Esophagus squamous epithelium (tissue), 5 donors: ENCODE measurements at regions of chr10 and their contacts with region 1.

Region 1: DNA sequence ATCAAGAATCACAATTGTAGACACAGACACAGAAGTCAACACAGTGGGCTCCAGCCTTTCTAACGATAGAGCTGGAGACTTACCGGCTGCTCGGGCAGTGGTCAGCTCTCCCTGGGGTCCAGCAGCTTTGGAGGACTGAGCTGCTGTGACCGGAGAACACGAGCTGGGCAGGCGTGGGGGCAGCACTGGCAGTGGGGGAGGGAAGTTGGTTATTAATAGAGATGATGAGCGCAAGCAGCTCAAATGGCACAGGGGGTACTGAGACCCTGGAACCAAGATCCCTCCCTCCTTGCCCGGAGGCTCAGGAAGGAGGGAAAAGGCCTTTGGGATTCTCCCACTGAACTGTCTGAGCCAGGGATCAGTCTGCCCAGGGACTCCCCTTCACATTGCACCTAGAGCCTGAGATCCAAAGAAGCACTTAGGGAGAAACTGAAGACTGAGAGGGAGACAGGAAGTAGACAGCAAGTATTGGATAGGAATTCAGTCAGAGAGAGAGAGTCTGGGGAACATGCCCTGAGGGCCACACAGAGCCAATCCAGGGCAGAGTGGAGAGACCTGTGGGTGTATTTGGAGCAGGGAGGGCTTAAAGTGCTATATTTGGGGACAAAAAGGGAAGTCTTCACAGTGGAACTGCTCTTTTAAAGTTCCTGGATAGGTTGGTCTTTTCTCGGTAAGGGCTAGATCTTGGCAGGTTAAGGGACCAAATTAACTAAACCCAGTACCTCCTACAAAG is at the start of gene MYOZ1:
- DNase-seq: no peak
- H3K4me3 ChIP-seq: no peak within 1 kb of the TSS
- H3K27ac ChIP-seq: no peak within 1 kb of the TSS
- H3K4me1 ChIP-seq: no peaks in the 10 kb centered on the region
- H3K27me3 ChIP-seq: no peaks in the 10 kb centered on the region
- CTCF ChIP-seq: no peak
- POLR2A ChIP-seq: no peak
- total RNA-seq, gene MYOZ1: 0.19 to 1.2 (median 0.79) TPM in 3 of 4 donors, not detected in the other

Region 2: DNA sequence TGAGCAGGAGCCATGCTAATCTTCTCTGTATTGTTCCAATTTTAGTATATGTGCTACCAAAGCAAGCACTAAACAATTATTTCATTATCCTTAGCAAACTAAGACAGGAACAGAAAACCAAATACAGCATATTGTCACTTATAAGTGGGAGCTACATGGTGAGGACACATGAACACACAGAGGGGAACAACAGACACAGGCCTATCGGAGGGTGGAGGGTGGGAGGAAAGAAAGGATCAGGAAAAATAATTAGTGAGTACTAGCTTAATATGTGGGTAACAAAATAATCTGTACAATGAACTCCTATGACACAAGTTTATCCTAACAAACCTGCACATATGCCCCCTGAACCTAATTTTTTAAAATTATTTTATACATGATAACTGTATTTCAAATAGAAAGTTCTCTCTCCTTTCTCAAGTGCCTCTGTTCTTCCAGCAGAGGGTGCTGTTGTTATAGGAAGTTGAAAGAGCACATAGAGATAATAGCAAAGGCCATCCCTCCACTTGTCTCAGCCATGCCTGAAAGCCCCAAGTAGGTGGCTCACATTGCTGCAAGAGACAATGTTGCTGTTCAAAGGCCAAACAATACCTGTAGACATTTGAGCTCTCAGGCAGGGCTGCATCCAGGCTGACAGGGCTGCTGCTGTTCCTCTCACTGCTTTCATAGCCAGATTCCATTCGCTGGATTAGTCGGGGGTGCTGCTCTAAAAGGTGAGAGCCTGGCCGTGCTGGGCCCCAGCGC is 112.2 kb before region 1 on chr10:
- intact Hi-C with region 1: loop called (anchors 2 kb)
- DNase-seq: no peak
- H3K4me3 ChIP-seq: no peak overlapping the region
- H3K27ac ChIP-seq: no peak overlapping the region
- H3K4me1 ChIP-seq: no peaks in the 10 kb centered on the region
- H3K27me3 ChIP-seq: no peaks in the 10 kb centered on the region
- CTCF ChIP-seq: peak; percentile 73 to 91 (median 85)
- POLR2A ChIP-seq: no peak